Keratinocyte (primary cell): ENCODE measurements at regions of chr20 and their contacts with region 1.

Region 1: GRCh38 chr20:46132705-46133120 is 14.6 kb downstream of the CD40 start:
- DNase-seq: peak; percentile 21
- H3K4me3 ChIP-seq: no peak overlapping the region
- H3K27ac ChIP-seq: no peak overlapping the region
- H3K4me1 ChIP-seq: no peaks in the 10 kb centered on the region
- H3K27me3 ChIP-seq: peaks cover 15% of the 10 kb centered on the region
- CTCF ChIP-seq: peak; percentile 75 to 95 (median 94)

Region 2: DNA sequence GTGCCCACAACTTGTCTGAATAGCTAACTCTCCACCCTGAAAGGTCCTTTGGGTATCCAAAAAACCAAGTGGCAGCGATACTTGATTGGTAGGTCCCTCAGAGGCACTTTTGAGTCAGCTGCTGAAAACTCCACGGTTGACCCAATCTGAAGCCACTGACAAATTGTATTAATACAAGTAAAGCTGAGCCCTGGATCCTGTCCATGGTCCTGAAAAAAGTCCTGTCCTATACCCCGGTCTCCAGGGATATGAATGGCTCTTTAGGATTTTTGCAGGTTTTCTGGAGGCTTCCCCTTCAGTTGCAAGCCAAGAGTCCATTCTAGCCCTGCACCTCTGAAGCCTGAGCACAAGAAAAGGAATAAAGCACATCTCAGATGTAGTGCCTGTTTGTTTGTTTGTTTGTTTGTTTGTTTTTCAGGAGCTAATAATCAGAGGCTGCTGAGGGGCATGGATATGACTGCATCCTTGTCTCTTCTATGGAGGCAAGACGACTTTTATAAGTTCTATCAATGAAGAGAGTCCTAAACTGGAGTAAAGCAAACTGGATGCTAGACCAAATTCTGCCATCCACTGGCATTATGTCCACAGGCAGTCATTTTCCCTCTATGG is 105.4 kb before region 1 on chr20:
- dilution Hi-C with region 1: no loop called
- DNase-seq: no peak
- H3K4me3 ChIP-seq: no peak overlapping the region
- H3K27ac ChIP-seq: no peak overlapping the region
- H3K4me1 ChIP-seq: peaks cover 3% of the 10 kb centered on the region
- H3K27me3 ChIP-seq: peaks cover 67% of the 10 kb centered on the region
- CTCF ChIP-seq: no peak

Region 3: DNA sequence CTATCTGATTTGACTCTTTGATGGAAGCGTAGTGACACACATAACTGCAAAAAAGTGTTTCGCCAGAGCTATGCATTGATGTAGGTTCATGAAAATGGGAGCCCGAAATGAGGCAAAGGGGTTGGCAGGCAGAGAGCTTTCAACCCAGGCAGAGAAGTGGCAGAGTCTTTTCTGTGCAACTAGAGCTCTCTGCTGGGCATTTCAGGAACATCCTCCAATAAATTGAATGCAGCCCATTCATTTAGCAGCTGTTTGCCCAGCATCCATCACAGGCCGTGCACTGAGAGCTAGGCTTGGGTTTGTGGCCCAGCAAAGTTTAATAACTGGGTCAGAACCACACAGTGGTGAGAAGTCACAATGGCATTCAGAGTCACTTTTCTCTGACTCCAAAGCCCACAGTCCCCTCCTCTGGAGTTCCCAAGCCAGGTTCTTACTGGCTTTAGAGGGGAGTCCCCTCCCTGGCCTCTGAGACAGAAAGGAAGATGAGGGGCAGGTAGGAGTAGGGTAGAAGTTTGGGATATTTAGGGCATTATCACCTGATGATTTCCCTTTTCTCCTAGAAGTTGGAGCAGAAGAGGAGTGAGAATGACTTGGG is 305.5 kb after region 1 on chr20:
- dilution Hi-C with region 1: loop called (anchors 25 kb)
- DNase-seq: no peak
- H3K4me3 ChIP-seq: no peak overlapping the region
- H3K27ac ChIP-seq: no peak overlapping the region
- H3K4me1 ChIP-seq: no peaks in the 10 kb centered on the region
- H3K27me3 ChIP-seq: peaks cover 9% of the 10 kb centered on the region
- CTCF ChIP-seq: peak; percentile 48 to 59 (median 50)